Common myeloid progenitor, CD34-positive (primary cell): ENCODE measurements at regions of chr1 and their contacts with region 1.

Region 1: DNA sequence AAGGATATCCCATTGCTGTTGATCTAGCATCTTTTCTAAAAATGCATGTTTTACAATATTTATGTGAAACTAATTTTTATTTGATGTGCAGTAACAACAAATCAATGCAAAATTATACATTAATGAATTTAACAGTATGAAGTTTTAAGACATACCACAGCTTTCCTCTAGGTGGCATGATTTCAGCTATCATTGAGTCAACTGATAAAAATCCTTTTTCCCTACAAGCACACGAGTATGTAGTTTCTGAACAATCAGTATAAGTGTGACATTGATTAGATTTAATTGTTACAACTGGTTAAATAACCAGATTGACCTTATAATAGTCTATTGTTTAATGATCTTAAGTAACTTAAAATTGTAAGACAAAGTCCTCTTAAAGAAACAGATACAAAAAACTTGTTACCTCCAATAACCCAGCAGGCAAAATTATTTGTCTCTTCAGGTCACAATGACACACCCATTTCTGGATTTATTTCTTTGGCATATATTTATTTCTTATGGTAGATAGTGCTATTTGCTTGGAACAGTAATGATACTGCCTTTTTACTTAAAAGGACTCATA is 5.8 kb upstream of the TGFB2 start:
- DNase-seq: peak in 2 of 3 donors; percentile 55 to 60
- H3K4me3 ChIP-seq: no peak overlapping the region
- H3K27ac ChIP-seq: no peak overlapping the region
- H3K4me1 ChIP-seq: no peaks in the 10 kb centered on the region
- H3K27me3 ChIP-seq: no peaks in the 10 kb centered on the region

Region 2: GRCh38 chr1:218209351-218209861 is 129.9 kb before region 1 on chr1:
- CTCF ChIA-PET with region 1: no interaction called
- POLR2A ChIA-PET with region 1: no interaction called
- DNase-seq: no peak
- H3K4me3 ChIP-seq: no peak overlapping the region
- H3K27ac ChIP-seq: no peak overlapping the region
- H3K4me1 ChIP-seq: no peaks in the 10 kb centered on the region
- H3K27me3 ChIP-seq: peaks cover 0 to 5% (median 0%) of the 10 kb centered on the region in 5 experiments

Region 3: DNA sequence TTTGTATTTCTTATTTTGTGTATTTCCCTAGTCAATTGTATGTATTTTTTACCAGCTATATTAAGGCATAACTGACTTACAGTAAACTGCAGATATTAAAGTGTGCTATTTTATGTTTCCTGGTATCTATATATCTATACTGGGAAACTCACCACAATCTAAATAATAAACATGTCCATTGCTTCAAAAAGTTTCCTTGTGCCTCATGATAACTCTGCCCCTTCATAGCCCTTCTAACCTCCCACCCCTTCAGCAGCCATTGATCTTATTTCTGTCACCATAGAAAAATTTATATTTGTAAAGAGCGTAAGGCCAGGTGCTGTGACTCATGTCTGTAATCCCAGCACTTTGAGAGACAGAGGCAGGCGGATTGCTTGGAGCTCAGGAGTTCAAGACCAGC is 63.5 kb before region 1 on chr1:
- CTCF ChIA-PET with region 1: no interaction called
- POLR2A ChIA-PET with region 1: no interaction called
- DNase-seq: no peak
- H3K4me3 ChIP-seq: no peak overlapping the region
- H3K27ac ChIP-seq: no peak overlapping the region
- H3K4me1 ChIP-seq: peaks cover 0 to 10% (median 3%) of the 10 kb centered on the region in 4 experiments
- H3K27me3 ChIP-seq: peaks cover 0 to under 1% (median 0%) of the 10 kb centered on the region in 5 experiments

Region 4: GRCh38 chr1:218377143-218377660 is 37.9 kb after region 1 on chr1:
- CTCF ChIA-PET with region 1: no interaction called
- POLR2A ChIA-PET with region 1: no interaction called
- DNase-seq: peak; percentile 53 to 83 (median 80)
- H3K4me3 ChIP-seq: no peak overlapping the region
- H3K27ac ChIP-seq: no peak overlapping the region
- H3K4me1 ChIP-seq: peaks cover 0 to 7% (median 0%) of the 10 kb centered on the region in 4 experiments
- H3K27me3 ChIP-seq: peaks cover 0 to 26% (median 14%) of the 10 kb centered on the region in 5 experiments

Region 5: DNA sequence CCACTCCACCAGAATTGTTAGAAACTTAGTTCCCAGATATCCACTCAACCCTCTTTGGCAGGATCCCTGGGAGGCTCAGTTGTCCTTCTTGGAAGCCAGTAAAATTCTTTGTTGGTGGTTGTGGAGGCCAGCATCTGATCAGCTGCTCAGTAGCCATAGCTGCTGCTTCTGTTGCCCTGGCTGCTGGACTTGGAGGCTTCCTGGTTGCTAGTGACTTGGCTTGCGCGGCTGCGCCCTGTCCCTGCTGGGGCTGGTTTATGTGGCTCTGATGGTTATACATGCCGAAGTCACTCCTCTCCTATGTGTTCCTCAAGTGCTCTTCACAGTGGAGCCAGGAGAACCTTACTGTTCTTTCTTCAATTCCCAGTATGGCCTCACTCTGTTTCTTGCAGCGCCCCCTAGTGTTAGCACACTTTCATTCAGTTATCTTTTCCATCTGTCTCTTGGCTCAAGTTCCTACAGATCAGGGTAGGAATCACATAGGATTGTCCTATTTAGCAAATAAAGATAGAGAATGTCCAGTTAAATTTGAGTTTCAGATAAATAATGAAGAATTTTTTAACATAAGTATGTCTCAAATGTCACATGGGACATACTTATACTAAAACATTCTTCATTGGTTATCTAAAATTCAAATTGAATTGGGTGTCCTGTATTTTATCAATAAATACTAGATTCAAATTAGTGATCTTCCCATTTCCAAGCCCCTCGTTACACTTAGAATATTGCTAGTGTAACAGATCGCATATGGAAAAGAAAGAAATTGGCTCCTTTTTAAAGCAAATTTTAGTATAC is 182.2 kb after region 1 on chr1:
- CTCF ChIA-PET with region 1: interaction called, 10 read pairs
- POLR2A ChIA-PET with region 1: no interaction called
- DNase-seq: peak; percentile 55 to 72 (median 61)
- H3K4me3 ChIP-seq: no peak overlapping the region
- H3K27ac ChIP-seq: no peak overlapping the region
- H3K4me1 ChIP-seq: no peaks in the 10 kb centered on the region
- H3K27me3 ChIP-seq: peaks cover 0 to 2% (median 0%) of the 10 kb centered on the region in 5 experiments